Common myeloid progenitor, CD34-positive (primary cell): ENCODE measurements at regions of chr20 and their contacts with region 1.

Region 1: DNA sequence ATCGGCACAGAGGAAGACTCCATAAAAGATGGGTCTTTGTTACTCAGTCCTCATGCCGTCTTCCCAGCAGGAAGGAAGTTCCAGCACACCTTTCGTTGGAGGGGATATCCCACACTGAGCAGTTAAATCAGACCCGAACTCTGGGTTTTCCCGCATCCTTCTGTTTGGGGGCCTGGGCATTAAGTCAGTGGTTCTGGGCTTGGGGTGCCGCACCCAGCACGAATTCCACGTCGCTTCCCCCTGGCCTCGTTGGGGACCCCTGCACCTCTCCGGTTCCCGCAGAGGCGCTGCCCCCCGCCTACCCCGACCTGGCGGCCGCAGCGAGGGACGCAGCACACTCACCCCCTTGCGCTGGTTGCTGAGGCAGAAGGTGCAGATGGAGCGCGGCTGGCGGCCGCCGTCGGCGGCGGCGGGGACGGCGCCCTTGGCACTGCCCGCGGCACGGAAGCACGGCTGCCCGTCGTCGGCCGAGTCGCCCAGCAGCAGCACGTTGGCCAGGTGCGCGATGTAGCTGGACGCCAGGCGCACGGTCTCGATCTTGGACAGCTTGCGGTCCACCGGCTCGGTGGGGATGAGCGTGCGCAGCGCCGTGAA is 641 bp downstream of the TCF15 start:
- DNase-seq: peak in 2 of 3 donors; percentile 40 to 51
- H3K4me3 ChIP-seq: peak overlapping the region in 5 of 7 experiments; percentile 23 to 66 (median 58)
- H3K27ac ChIP-seq: no peak overlapping the region
- H3K4me1 ChIP-seq: peaks cover 3 to 44% (median 40%) of the 10 kb centered on the region in 4 experiments
- H3K27me3 ChIP-seq: peaks cover 0 to 9% (median 2%) of the 10 kb centered on the region in 5 experiments

Region 2: GRCh38 chr20:621125-621756 is 11.8 kb after region 1 on chr20:
- CTCF ChIA-PET with region 1: interaction called, 17 read pairs
- POLR2A ChIA-PET with region 1: no interaction called
- DNase-seq: no peak
- H3K4me3 ChIP-seq: no peak overlapping the region
- H3K27ac ChIP-seq: no peak overlapping the region
- H3K4me1 ChIP-seq: peaks cover 1 to 30% (median 15%) of the 10 kb centered on the region in 4 experiments
- H3K27me3 ChIP-seq: no peaks in the 10 kb centered on the region